ENCODE measurements at regions of chr17 and their contacts with region 1.

Region 1: DNA sequence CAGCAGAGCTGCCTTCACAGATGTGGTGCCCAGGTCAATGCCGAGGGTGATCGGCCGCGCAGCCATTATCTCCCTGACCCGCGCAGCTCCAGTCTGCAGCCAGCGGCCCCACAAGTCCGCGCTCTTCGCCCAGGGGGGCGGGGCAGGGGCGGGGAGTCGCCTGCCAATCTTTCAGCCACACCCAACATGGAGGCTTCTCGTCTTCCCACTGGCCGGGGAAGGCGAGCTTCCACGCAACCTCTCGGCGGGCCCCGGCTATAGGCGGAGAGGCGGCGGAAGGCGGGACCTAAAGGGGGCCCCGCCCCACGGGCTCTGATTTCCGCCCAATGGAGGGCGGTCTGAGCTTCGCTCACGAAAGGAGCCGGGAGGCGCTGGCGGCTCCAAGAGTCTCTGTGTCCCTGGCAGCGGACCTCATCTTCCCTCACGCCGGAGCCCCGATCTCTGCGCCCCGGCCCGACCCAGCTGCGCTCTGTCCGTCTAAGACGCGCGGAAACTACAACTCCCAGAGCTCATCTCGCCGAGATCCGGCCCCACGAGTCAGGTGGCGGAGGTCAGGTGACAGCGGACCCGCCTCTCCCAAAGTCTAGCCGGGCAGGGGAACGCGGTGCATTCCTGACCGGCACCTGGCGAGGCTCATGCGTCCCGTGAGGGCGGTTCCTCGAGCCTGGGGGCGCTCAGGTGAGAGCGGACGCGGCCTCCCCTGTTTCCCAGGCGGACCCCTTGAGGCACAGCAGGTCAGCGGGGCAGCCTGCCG is at the starts of genes CTNS and SHPK:
- DNase-seq: peak; percentile 86 to 96 (median 92)
- ATAC-seq: peak; percentile 98
- H3K4me3 ChIP-seq: peak within 1 kb of the TSS; percentile 80
- H3K4me3 Mint-ChIP-seq: peak within 1 kb of the TSS; percentile 98
- H3K27ac ChIP-seq: peak within 1 kb of the TSS; percentile 93 to 99
- H3K27ac Mint-ChIP-seq: peak within 1 kb of the TSS; percentile 99
- H3K4me1 ChIP-seq: peaks cover 27% of the 10 kb centered on the region
- H3K4me1 Mint-ChIP-seq: peaks cover 21% of the 10 kb centered on the region
- H3K27me3 ChIP-seq: no peaks in the 10 kb centered on the region
- H3K27me3 Mint-ChIP-seq: no peaks in the 10 kb centered on the region
- CTCF ChIP-seq: no peak
- total RNA-seq, gene CTNS: 3.3 to 4.9 TPM
- total RNA-seq, gene SHPK: 3.4 TPM

Region 2: DNA sequence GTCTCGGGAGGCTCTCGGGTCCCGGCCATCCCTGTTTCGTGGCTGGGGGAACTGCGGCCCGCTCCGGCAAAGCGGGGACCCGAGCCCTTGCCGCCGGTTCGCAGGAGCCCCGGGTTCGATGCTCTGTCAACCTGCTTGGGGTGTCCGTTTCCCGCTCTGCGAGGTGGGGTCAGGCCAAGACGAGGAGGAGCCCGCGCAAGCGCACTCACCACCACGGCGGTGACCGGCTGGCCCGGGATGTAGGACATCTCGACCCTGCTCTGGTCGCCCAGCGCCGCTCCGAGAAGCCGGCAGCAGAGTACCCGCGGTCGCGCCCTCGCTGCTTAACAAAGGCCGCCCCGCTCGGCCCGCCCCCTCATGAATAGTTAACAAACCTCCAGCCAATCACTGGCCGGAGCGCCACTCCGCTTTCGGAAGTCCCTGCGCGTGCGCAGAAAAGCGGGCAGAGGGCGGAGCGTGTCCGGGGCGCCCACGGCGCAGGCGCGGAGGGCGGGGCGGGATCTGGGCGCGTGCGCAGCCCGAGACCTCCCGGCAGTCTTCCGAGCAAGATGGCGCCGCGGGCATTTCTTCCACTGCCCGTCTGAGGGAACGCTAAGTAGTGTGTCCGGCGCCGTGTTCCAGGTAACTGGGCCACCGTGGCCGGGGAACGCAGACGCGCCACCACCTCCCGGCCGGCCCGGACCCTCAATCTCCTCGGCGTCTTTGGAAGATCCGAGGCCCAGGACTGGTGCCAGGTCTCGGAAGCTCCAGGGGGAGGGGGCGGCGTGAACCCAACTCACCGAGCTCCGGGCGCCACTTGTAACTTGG is 32.2 kb after region 1 on chr17 and contains the starts of genes EMC6 and TAX1BP3:
- CTCF ChIA-PET with region 1: no interaction called
- POLR2A ChIA-PET with region 1: interaction called, 11 read pairs
- intact Hi-C with region 1: loop called (anchors 1 kb)
- DNase-seq: peak; percentile 96 to 99 (median 99)
- ATAC-seq: peak; percentile 94
- H3K4me3 ChIP-seq: peak within 1 kb of the TSS; percentile 100
- H3K4me3 Mint-ChIP-seq: peak within 1 kb of the TSS; percentile 92
- H3K27ac ChIP-seq: peak within 1 kb of the TSS; percentile 67 to 78
- H3K27ac Mint-ChIP-seq: peak within 1 kb of the TSS; percentile 81
- H3K4me1 ChIP-seq: peaks cover 25% of the 10 kb centered on the region
- H3K4me1 Mint-ChIP-seq: peaks cover 13% of the 10 kb centered on the region
- H3K27me3 ChIP-seq: no peaks in the 10 kb centered on the region
- H3K27me3 Mint-ChIP-seq: no peaks in the 10 kb centered on the region
- CTCF ChIP-seq: no peak
- total RNA-seq, gene EMC6: 28.8 to 29.6 TPM
- total RNA-seq, gene TAX1BP3: 6.0 to 6.6 TPM